Mammary epithelial cell (primary cell): ENCODE measurements at regions of chr5 and their contacts with region 1.

Region 1: GRCh38 chr5:171606414-171607024 is 179.1 kb upstream of the SMIM23 start:
- DNase-seq: no peak
- H3K4me3 ChIP-seq: no peak overlapping the region
- H3K27ac ChIP-seq: no peak overlapping the region
- H3K4me1 ChIP-seq: no peaks in the 10 kb centered on the region
- H3K27me3 ChIP-seq: peaks cover 1% of the 10 kb centered on the region
- CTCF ChIP-seq: peak; percentile 53 to 62

Region 2: GRCh38 chr5:171418316-171418981 is 188.1 kb before region 1 on chr5:
- CTCF ChIA-PET with region 1: interaction called, 3 read pairs
- dilution Hi-C with region 1: no loop called
- in situ Hi-C with region 1: no loop called
- intact Hi-C with region 1: loop called (anchors 2 kb)
- DNase-seq: peak; percentile 70
- H3K4me3 ChIP-seq: peak overlapping the region in 1 of 3 experiments; percentile 31
- H3K27ac ChIP-seq: no peak overlapping the region
- H3K4me1 ChIP-seq: peaks cover 15% of the 10 kb centered on the region
- H3K27me3 ChIP-seq: peaks cover 8% of the 10 kb centered on the region
- CTCF ChIP-seq: peak; percentile 77 to 89

Region 3: GRCh38 chr5:171445644-171446516 is 160.6 kb before region 1 on chr5:
- CTCF ChIA-PET with region 1: no interaction called
- dilution Hi-C with region 1: no loop called
- in situ Hi-C with region 1: loop called in 1 of 2 experiments (anchors 25 kb)
- intact Hi-C with region 1: no loop called
- DNase-seq: no peak
- H3K4me3 ChIP-seq: no peak overlapping the region
- H3K27ac ChIP-seq: no peak overlapping the region
- H3K4me1 ChIP-seq: no peaks in the 10 kb centered on the region
- H3K27me3 ChIP-seq: no peaks in the 10 kb centered on the region
- CTCF ChIP-seq: no peak

Region 4: DNA sequence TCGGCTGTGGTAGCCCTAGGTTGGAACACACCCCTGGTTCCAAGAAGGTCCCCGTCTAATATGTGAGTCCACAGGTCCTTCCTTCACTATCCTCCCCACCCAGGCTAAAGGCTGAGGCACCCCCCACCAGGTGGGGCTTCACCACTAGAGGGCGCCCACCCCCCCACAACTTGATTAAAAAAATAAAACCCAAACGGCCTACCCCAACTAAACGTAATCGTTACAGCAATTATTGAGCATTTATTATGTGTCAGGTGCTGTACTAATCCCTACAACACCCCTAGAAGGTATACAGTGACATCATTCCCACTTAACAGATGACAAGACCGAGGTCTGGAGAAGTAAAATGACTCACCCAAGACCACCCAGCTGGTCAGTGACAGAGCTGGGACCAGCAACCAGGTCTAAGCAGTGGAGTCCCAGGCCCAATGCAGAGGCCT is 122.0 kb before region 1 on chr5:
- CTCF ChIA-PET with region 1: interaction called, 4 read pairs
- dilution Hi-C with region 1: no loop called
- in situ Hi-C with region 1: no loop called
- intact Hi-C with region 1: loop called (anchors 2 kb)
- DNase-seq: no peak
- H3K4me3 ChIP-seq: no peak overlapping the region
- H3K27ac ChIP-seq: no peak overlapping the region
- H3K4me1 ChIP-seq: no peaks in the 10 kb centered on the region
- H3K27me3 ChIP-seq: no peaks in the 10 kb centered on the region
- CTCF ChIP-seq: peak; percentile 60 to 70

Region 5: GRCh38 chr5:171840066-171840465 is 233.5 kb after region 1 on chr5:
- CTCF ChIA-PET with region 1: no interaction called
- dilution Hi-C with region 1: no loop called
- in situ Hi-C with region 1: no loop called
- intact Hi-C with region 1: no loop called
- DNase-seq: no peak
- H3K4me3 ChIP-seq: no peak overlapping the region
- H3K27ac ChIP-seq: no peak overlapping the region
- H3K4me1 ChIP-seq: no peaks in the 10 kb centered on the region
- H3K27me3 ChIP-seq: no peaks in the 10 kb centered on the region
- CTCF ChIP-seq: no peak

Region 6: GRCh38 chr5:171893290-171893886 is 286.9 kb after region 1 on chr5:
- CTCF ChIA-PET with region 1: no interaction called
- dilution Hi-C with region 1: no loop called
- in situ Hi-C with region 1: no loop called
- intact Hi-C with region 1: no loop called
- DNase-seq: no peak
- H3K4me3 ChIP-seq: no peak overlapping the region
- H3K27ac ChIP-seq: no peak overlapping the region
- H3K4me1 ChIP-seq: no peaks in the 10 kb centered on the region
- H3K27me3 ChIP-seq: no peaks in the 10 kb centered on the region
- CTCF ChIP-seq: no peak